ENCODE measurements at regions of chr17 and their contacts with region 1.

Region 1: DNA sequence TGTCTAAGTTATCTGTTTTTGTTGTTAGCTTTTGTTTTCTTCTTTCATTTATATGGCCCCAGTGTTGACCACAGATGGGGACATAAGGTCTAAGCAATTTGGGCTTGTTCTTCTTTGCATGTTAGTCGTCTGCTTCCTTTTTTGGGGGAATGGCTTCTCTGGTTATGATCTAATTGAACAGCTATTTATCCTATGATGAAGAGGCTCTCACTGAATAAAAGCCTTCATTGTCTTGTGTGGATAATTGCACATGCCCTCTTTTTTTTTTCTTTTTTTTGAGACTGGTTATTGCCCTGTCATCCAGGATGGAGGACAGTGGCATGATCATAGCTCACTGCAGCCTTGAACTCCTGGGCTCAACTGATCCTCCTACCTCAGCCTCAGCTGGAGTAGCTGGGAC is 13.7 kb downstream of the SMARCE1 start:
- DNase-seq: no peak
- CTCF ChIP-seq: no peak

Region 2: GRCh38 chr17:40647624-40648383 is 13.9 kb after region 1 on chr17 and contains the start of gene SMARCE1:
- CTCF ChIA-PET with region 1: interaction called, 18 read pairs
- POLR2A ChIA-PET with region 1: no interaction called
- DNase-seq: peak; percentile 81
- CTCF ChIP-seq: no peak

Measured in GM10248 (cell line).